ENCODE measurements at regions of chr1 and their contacts with region 1.

Region 1: DNA sequence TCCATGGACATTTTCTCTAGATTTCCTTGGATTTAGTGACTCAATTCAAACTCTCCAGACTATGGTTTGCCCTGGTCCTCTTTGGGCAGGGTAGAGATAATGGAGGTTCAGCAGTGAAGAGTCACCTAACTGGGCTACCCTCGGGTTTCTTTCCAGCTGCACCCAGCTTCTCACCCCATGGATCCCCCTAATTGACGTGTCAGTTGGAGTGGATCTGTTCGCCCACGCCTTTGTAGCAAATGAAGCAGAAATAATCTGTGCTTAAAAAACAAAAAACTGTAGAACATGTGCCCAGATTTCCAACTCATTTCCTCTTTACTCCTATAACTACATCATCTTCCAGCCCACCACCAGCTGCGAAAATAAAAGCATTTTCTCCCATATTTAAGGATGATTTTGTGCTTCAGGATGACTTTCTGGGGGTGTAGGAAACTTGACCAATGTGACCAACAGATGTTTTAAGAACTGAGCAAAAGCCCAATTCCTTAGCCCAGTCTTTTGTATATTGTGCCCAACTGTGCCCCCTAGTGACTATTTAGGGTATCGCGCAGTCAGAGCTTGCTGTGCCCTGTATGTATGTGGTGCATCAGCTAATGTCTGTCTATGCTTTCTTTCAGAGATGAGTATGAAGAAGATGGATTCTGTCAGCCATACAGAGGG is 66.5 kb upstream of the UBE2U start:
- DNase-seq: peak; percentile 43 to 81
- ATAC-seq: peak; percentile 76 to 91 (median 88)
- H3K4me3 ChIP-seq: no peak overlapping the region
- H3K27ac ChIP-seq: peak overlapping the region in 4 of 10 donors; percentile 23 to 59 (median 32)
- H3K4me1 ChIP-seq: peaks cover 0 to 14% (median 3%) of the 10 kb centered on the region in 9 donors
- H3K27me3 ChIP-seq: no peaks in the 10 kb centered on the region
- CTCF ChIP-seq: peak; percentile 68 to 89 (median 84)

Region 2: DNA sequence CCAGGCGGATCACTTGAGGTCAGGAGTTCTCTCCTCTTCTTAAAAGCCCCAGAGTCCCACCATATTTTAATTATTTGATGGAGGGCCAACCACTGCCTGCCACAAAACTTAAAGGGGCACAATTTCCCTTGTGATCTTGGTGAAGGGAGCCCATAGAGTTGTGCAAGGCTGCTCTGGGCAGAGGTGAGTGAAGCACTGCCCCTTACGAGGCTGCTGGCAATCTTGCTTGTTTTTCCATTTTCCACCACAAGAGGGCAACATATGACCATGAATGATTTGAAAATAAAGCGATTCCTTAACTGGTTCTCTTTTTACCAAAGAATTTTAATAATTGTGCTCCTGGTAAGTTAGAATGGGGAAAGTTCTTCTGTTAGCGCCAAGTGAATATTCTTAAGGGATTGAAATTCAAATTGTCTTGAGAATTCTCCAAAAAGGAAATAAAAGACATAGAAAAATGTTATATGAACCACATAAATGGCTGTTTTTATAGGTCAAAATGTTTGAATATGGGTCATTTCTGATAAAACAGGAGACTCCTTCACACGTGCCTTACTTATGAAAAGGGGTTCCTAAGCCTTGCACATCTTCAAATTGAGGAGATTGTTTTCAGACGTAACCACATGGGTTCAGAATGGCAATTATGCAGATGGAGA is 521.0 kb before region 1 on chr1:
- intact Hi-C with region 1: loop called in 9 of 10 experiments (anchors 2 to 10 kb)
- DNase-seq: peak in 1 of 2 donors; percentile 60
- ATAC-seq: peak in 7 of 8 donors; percentile 59 to 67 (median 63)
- H3K4me3 ChIP-seq: no peak overlapping the region
- H3K27ac ChIP-seq: no peak overlapping the region
- H3K4me1 ChIP-seq: peaks cover 0 to 43% (median 10%) of the 10 kb centered on the region in 9 donors
- H3K27me3 ChIP-seq: no peaks in the 10 kb centered on the region
- CTCF ChIP-seq: peak; percentile 60 to 84 (median 81)

Region 3: GRCh38 chr1:63698001-63698838 is 438.7 kb before region 1 on chr1:
- intact Hi-C with region 1: loop called in 7 of 10 experiments (anchors 5 to 10 kb)
- DNase-seq: peak; percentile 61 to 69
- ATAC-seq: peak; percentile 63 to 94 (median 89)
- H3K4me3 ChIP-seq: no peak overlapping the region
- H3K27ac ChIP-seq: peak overlapping the region; percentile 76 to 99 (median 93)
- H3K4me1 ChIP-seq: peaks cover 0 to 37% (median 16%) of the 10 kb centered on the region in 9 donors
- H3K27me3 ChIP-seq: no peaks in the 10 kb centered on the region
- CTCF ChIP-seq: no peak

Region 4: DNA sequence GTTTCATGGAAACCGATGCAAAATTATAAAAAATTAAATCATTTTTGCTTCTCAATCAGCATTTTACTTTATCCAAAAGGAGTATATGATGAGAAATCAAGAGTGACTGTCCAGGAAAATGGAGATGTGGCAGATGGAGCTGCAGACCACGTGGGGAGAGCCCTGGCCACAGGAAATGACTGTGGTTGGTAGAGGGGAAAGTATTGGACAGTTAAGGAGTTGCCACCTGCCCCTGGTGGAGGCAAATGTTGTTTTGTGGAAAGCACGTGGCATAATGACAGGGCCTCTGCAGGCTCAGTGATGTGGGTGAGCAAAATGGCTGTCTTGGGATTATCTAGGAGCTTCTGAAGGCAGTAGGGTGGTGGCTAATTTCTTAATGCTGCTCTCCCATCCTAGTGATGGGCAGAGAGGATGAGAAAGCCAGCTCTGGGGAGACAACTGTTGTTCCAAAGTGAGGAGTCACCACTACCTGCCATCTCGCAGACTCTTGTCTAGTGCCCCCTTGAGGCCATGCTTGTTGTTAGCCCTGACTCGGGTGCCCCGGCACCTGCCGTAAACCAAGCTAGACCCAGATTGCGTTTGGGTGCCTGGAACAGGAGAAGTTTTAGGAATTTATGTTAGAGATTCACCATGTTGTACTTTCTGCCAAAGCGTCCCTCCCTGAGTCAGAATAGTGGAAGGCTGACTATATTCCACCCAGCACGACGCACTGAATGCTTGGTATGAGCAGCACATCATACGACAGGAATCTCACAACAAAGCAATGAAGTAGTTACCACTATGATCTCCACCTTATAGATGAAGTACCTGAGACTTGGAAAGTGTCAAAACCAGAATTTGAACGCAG is 219.1 kb before region 1 on chr1:
- intact Hi-C with region 1: loop called in 1 of 10 experiments (anchors 10 kb)
- DNase-seq: no peak
- ATAC-seq: no peak
- H3K4me3 ChIP-seq: no peak overlapping the region
- H3K27ac ChIP-seq: no peak overlapping the region
- H3K4me1 ChIP-seq: peaks cover 8 to 75% (median 42%) of the 10 kb centered on the region in 9 donors
- H3K27me3 ChIP-seq: no peaks in the 10 kb centered on the region
- CTCF ChIP-seq: peak in 2 of 9 donors; percentile 17 to 22

Region 5: DNA sequence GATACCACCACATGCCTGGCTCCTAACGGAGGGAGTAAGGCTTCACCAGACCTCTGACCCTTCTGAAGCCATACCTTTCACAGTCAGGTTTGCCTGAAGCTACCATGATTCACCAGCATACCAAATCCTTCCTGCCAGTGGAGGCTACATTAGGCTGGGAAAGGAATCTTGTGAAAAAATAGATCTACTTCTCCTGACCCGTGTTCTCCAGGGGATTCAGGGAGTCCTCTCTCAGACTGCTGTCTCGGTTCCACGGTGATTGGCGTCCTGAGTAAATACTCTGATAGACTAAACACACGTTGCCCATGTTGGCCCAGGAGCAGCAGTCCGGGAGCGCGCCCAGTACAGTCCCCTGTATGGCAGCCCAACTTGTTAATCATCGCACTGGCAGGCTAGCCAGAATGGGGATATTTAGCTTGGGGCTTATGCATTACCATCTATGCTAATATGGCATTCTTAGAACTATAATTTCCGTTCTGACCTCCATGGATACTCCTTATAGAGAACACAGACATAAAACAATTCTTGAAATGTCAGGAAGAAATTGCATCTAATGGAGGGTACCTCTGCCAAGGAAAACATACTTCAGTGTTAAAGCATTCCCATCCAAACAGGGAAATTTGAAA is 189.9 kb before region 1 on chr1:
- intact Hi-C with region 1: loop called in 2 of 10 experiments (anchors 5 to 10 kb)
- DNase-seq: peak; percentile 43 to 47
- ATAC-seq: peak in 7 of 8 donors; percentile 65 to 90 (median 82)
- H3K4me3 ChIP-seq: no peak overlapping the region
- H3K27ac ChIP-seq: peak overlapping the region in 6 of 10 donors; percentile 1 to 65 (median 52)
- H3K4me1 ChIP-seq: peaks cover 6 to 82% (median 38%) of the 10 kb centered on the region in 9 donors
- H3K27me3 ChIP-seq: no peaks in the 10 kb centered on the region
- CTCF ChIP-seq: no peak